ENCODE measurements at regions of chr4 and their contacts with region 1.

Region 1: GRCh38 chr4:6688879-6689505 is 4.7 kb upstream of the S100P start:
- DNase-seq: peak; percentile 91
- H3K4me3 Mint-ChIP-seq: peak overlapping the region; percentile 81
- H3K27ac Mint-ChIP-seq: peak overlapping the region; percentile 97
- H3K4me1 Mint-ChIP-seq: peaks cover 87% of the 10 kb centered on the region
- H3K27me3 Mint-ChIP-seq: no peaks in the 10 kb centered on the region

Region 2: DNA sequence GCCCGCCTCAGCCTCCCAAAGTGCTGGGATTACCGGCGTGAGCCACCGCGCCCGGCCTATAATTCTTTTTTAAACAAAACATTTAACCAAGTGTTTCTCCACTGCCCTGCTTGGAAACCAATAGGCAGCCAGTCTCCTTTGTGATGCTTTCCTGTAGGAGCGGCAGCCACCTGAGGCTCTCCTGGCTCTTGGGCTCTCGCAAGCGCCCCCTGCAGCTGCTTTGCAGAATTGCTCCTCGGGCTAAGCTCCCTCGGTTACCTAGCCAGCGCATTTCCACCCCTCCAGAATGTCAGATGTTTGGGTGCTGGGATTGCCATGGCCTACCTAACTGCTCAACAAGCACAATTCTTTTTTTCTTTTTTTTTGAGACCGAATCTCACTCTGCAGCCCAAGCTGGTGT is 12.4 kb after region 1 on chr4:
- CTCF ChIA-PET with region 1: interaction called, 70 read pairs
- POLR2A ChIA-PET with region 1: interaction called, 253 read pairs
- DNase-seq: peak; percentile 57
- H3K4me3 Mint-ChIP-seq: no peak overlapping the region
- H3K27ac Mint-ChIP-seq: no peak overlapping the region
- H3K4me1 Mint-ChIP-seq: peaks cover 79% of the 10 kb centered on the region
- H3K27me3 Mint-ChIP-seq: no peaks in the 10 kb centered on the region

Measured in activated CD4-positive, alpha-beta memory T cell treated with anti-CD3 and anti-CD28 coated beads, Interleukin-2, amount 10 ng/mL, durations not matched to agents 7 days and 5 days (primary cell).